Tibial artery (tissue), 4 donors: ENCODE measurements at regions of chr11 and their contacts with region 1.

Region 1: GRCh38 chr11:96054870-96055705 is 131.2 kb upstream of the MTMR2 start:
- DNase-seq: no peak
- H3K4me3 ChIP-seq: no peak overlapping the region
- H3K27ac ChIP-seq: peak overlapping the region; percentile 63 to 67
- H3K4me1 ChIP-seq: peaks cover 0 to 56% (median 51%) of the 10 kb centered on the region in 4 donors
- H3K27me3 ChIP-seq: no peaks in the 10 kb centered on the region
- CTCF ChIP-seq: peak; percentile 63 to 75

Region 2: GRCh38 chr11:95999599-96000406 is 55.3 kb before region 1 on chr11:
- intact Hi-C with region 1: loop called (anchors 5 kb)
- DNase-seq: no peak
- H3K4me3 ChIP-seq: peak overlapping the region; percentile 6 to 31
- H3K27ac ChIP-seq: peak overlapping the region; percentile 77 to 87
- H3K4me1 ChIP-seq: peaks cover 0 to 33% (median 22%) of the 10 kb centered on the region in 4 donors
- H3K27me3 ChIP-seq: no peaks in the 10 kb centered on the region
- CTCF ChIP-seq: no peak